Left ventricle myocardium inferior (tissue), 1 donor: ENCODE measurements at regions of chr9 and their contacts with region 1.

Region 1: DNA sequence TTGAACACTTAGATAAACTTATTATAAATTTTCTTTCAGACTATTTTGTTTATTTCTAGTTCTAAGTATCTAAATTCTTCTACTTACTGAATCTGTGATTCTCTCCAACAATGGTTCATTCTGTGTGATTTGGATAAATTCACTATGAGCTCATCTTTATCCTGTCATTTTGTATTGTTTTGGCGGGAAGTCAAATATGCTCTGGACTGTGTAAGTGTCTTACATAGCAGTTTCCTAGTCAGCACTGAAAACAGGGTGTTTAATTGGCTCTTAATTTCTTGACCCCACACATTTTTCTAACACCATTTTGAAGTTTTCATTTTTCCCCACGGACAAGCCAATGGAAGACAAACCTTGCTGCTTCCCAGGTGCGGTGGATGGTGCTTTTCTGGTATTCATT is 207.0 kb upstream of the ACO1 start:
- DNase-seq: no peak
- H3K4me3 ChIP-seq: no peak overlapping the region
- H3K27ac ChIP-seq: no peak overlapping the region
- H3K4me1 ChIP-seq: no peaks in the 10 kb centered on the region
- H3K27me3 ChIP-seq: no peaks in the 10 kb centered on the region
- CTCF ChIP-seq: no peak

Region 2: DNA sequence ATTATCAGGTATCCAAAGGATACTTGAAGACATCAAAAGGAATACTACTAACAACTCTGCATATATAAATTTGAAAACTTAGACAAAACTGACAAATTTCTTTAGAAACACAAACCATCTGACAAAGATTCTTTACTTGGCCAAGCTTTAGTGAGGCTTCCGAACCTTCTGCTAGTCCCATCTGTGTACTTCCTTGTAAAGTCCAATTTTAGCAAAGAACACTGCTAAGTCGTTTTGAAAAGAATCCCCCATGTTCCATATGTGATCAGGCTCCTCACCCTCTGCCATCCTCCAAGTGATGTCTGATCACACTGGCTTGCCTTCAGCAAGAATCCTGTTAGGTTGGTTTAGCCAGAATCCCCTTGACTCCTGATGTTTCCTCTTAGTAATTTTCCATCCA is 57.1 kb after region 1 on chr9:
- intact Hi-C with region 1: loop called (anchors 10 kb)
- DNase-seq: no peak
- H3K4me3 ChIP-seq: no peak overlapping the region
- H3K27ac ChIP-seq: no peak overlapping the region
- H3K4me1 ChIP-seq: no peaks in the 10 kb centered on the region
- H3K27me3 ChIP-seq: no peaks in the 10 kb centered on the region
- CTCF ChIP-seq: no peak